HepG2 (cell line): ENCODE measurements at regions of chr18 and their contacts with region 1.

Region 1: GRCh38 chr18:6521795-6522418 is 107.2 kb upstream of the L3MBTL4 start:
- DNase-seq: peak; percentile 53
- ATAC-seq: peak; percentile 66
- H3K4me3 ChIP-seq: no peak overlapping the region
- H3K27ac ChIP-seq: no peak overlapping the region
- H3K4me1 ChIP-seq: no peaks in the 10 kb centered on the region
- H3K27me3 ChIP-seq: no peaks in the 10 kb centered on the region
- CTCF ChIP-seq: peak; percentile 82
- EP300 ChIP-seq: no peak
- POLR2A ChIP-seq: no peak
- RAD21 ChIP-seq: no peak

Region 2: GRCh38 chr18:5600378-5601071 is 921.4 kb before region 1 on chr18:
- CTCF ChIA-PET with region 1: interaction called, 4 read pairs
- POLR2A ChIA-PET with region 1: no interaction called
- in situ Hi-C with region 1: loop called (anchors 25 kb)
- intact Hi-C with region 1: no loop called
- DNase-seq: peak; percentile 16
- ATAC-seq: no peak
- H3K4me3 ChIP-seq: no peak overlapping the region
- H3K27ac ChIP-seq: no peak overlapping the region
- H3K4me1 ChIP-seq: peaks cover 8% of the 10 kb centered on the region
- H3K27me3 ChIP-seq: 0 out of 5 replicates have a peak, but pooled peaks cover 0 to 1% of the 10 kb centered on the region in 2 experiments
- CTCF ChIP-seq: peak; percentile 26
- EP300 ChIP-seq: no peak
- POLR2A ChIP-seq: no peak
- RAD21 ChIP-seq: no peak

Region 3: DNA sequence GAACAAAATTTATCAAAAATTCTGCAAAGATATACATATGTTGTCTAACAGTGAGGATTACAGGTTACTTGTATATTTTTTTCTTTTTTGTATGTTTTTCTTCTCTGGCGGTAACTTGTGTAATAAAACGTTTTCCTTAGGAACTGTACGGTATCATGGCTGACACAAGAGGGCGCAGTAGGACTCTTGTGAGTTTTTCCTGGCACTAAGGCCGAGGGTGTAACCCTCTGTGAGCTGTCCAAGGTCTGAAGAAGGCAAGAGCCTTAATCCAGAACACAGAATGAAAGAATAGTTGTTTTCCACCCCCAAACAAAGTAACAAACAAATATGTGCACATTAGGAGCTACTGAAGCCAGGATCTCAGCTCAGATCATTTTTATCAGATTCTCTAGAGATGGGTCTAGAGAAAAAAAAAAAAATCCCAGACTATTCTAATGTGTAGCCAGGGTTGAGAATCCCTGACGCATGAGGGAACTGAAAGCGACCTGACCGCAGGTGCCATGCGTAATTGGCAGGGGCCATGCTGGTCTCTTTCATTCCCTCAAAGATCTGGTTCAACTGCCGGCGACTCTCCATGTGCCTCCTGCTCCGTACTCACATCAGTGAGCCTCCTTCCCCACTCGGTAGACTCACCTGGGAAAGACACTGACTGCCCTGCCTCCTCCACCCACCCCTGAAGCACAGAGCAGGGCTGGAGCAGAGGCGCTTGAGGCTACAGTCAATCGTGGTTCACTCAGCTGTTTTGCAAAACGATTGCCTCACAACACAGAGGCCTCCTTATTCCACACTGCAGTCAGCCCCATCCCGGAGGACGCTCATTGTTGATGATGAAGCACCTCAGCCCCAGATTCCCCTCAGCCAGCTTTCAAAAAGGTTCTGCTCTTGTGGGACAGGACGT is 653.4 kb before region 1 on chr18:
- CTCF ChIA-PET with region 1: interaction called, 22 read pairs
- POLR2A ChIA-PET with region 1: no interaction called
- in situ Hi-C with region 1: loop called (anchors 10 kb)
- intact Hi-C with region 1: loop called (anchors 1 kb)
- DNase-seq: peak; percentile 83
- ATAC-seq: peak; percentile 97
- H3K4me3 ChIP-seq: no peak overlapping the region
- H3K27ac ChIP-seq: no peak overlapping the region
- H3K4me1 ChIP-seq: no peaks in the 10 kb centered on the region
- H3K27me3 ChIP-seq: no peaks in the 10 kb centered on the region
- CTCF ChIP-seq: peak; percentile 84
- EP300 ChIP-seq: no peak
- POLR2A ChIP-seq: no peak
- RAD21 ChIP-seq: peak; percentile 82

Region 4: DNA sequence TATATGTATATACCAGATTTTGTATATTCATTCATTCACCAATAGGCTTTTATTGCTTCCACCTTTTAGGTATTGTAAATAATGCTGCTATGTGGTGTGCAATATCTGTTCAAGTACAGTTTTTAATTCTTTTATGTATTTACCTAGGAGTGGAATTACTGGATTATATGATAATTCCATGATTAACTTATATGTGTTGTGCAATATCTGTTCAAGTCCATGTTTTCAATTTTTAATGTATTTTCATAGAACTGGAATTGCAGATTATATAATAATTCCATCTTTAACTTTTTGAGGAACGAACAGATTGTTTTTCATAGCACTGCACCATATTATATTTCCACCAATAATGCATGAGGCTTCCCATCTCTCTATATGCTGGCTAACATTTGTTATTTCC is 56.6 kb before region 1 on chr18:
- CTCF ChIA-PET with region 1: no interaction called
- POLR2A ChIA-PET with region 1: no interaction called
- in situ Hi-C with region 1: no loop called
- intact Hi-C with region 1: no loop called
- DNase-seq: no peak
- ATAC-seq: no peak
- H3K4me3 ChIP-seq: no peak overlapping the region
- H3K27ac ChIP-seq: no peak overlapping the region
- H3K4me1 ChIP-seq: no peaks in the 10 kb centered on the region
- H3K27me3 ChIP-seq: no peaks in the 10 kb centered on the region
- CTCF ChIP-seq: no peak
- EP300 ChIP-seq: no peak
- POLR2A ChIP-seq: no peak
- RAD21 ChIP-seq: no peak

Region 5: GRCh38 chr18:6648581-6648980 is 126.7 kb after region 1 on chr18:
- CTCF ChIA-PET with region 1: no interaction called
- POLR2A ChIA-PET with region 1: no interaction called
- in situ Hi-C with region 1: no loop called
- intact Hi-C with region 1: no loop called
- DNase-seq: no peak
- ATAC-seq: no peak
- H3K4me3 ChIP-seq: no peak overlapping the region
- H3K27ac ChIP-seq: no peak overlapping the region
- H3K4me1 ChIP-seq: peaks cover 6% of the 10 kb centered on the region; the same call in 1 of the 2 replicates
- H3K27me3 ChIP-seq: peaks cover 1 to 8% of the 10 kb centered on the region in 2 experiments; a peak in 2 of 5 replicates
- CTCF ChIP-seq: no peak
- EP300 ChIP-seq: no peak
- POLR2A ChIP-seq: no peak
- RAD21 ChIP-seq: no peak